ENCODE measurements at regions of chr7 and their contacts with region 1.

Region 1: GRCh38 chr7:146175716-146176115 is 59.1 kb downstream of the CNTNAP2 start:
- DNase-seq: no peak

Region 2: GRCh38 chr7:145655666-145656065 is 520.0 kb before region 1 on chr7:
- intact Hi-C with region 1: loop called in 1 of 2 experiments (anchors 5 kb)
- DNase-seq: no peak

Region 3: GRCh38 chr7:146074195-146074765 is 101.4 kb before region 1 on chr7:
- intact Hi-C with region 1: no loop called
- DNase-seq: no peak